CD8-positive, alpha-beta memory T cell (primary cell): ENCODE measurements at regions of chr7 and their contacts with region 1.

Region 1: GRCh38 chr7:99558306-99559174 is at the start of gene ZNF655:
- DNase-seq: peak; percentile 88 to 97 (median 95)
- H3K4me3 ChIP-seq: peak within 1 kb of the TSS; percentile 86
- H3K4me3 Mint-ChIP-seq: peak within 1 kb of the TSS; percentile 93 to 100 (median 99)
- H3K27ac ChIP-seq: peak within 1 kb of the TSS; percentile 98
- H3K27ac Mint-ChIP-seq: peak within 1 kb of the TSS; percentile 97 to 100 (median 99)
- H3K4me1 ChIP-seq: peaks cover 33% of the 10 kb centered on the region
- H3K4me1 Mint-ChIP-seq: peaks cover 45 to 73% (median 53%) of the 10 kb centered on the region in 3 donors
- H3K27me3 ChIP-seq: no peaks in the 10 kb centered on the region
- H3K27me3 Mint-ChIP-seq: peaks cover 0 to 2% of the 10 kb centered on the region in 2 donors
- total RNA-seq, gene ZNF655: 55.8 to 58.2 TPM

Region 2: DNA sequence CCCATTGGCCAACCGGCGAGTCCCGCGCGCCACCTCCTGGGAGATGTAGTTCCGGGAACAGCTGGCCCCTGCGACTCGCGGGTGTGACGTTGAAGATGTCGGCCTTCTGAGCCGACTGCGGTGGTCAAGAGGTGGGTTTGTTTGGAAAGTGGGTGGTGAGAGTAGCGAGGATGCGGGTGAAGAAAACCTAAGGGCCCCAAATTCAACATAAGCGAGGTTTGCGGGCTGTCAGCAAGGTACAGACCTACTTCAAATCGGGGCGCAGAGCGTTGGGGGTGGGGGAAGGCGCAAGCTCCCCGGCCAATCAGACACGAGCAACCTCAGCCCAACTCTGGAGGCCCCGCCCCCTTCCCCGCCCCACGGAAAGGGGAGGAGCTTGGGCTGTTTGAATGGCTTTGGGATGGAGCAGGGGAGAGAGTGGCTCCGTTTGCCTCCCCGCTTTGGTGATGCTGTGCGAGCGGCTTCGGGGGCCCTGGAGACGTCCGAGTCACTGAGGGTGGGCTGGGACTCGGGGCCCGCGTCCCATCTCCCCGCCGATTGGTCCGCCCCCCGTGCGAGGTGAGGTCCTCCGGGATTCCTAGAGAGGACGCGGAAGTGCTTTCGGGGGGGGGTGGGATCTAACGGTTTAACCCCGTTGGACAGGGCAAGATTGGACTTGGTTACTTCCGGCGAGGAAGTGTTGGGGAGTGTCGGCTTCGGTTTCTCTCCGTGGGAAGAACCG is 53.8 kb before region 1 on chr7 and contains the start of gene ZKSCAN5:
- CTCF ChIA-PET with region 1: interaction called, 7 read pairs
- POLR2A ChIA-PET with region 1: interaction called, 34 read pairs
- DNase-seq: peak; percentile 95 to 98 (median 97)
- H3K4me3 ChIP-seq: peak within 1 kb of the TSS; percentile 94
- H3K4me3 Mint-ChIP-seq: peak within 1 kb of the TSS; percentile 94 to 100 (median 97)
- H3K27ac ChIP-seq: peak within 1 kb of the TSS; percentile 75
- H3K27ac Mint-ChIP-seq: peak within 1 kb of the TSS; percentile 92 to 100 (median 99)
- H3K4me1 ChIP-seq: peaks cover 26% of the 10 kb centered on the region
- H3K4me1 Mint-ChIP-seq: peaks cover 23 to 49% (median 38%) of the 10 kb centered on the region in 3 donors
- H3K27me3 ChIP-seq: no peaks in the 10 kb centered on the region
- H3K27me3 Mint-ChIP-seq: peaks cover 0 to 3% of the 10 kb centered on the region in 2 donors
- total RNA-seq, gene ZKSCAN5: 8.4 TPM

Region 3: DNA sequence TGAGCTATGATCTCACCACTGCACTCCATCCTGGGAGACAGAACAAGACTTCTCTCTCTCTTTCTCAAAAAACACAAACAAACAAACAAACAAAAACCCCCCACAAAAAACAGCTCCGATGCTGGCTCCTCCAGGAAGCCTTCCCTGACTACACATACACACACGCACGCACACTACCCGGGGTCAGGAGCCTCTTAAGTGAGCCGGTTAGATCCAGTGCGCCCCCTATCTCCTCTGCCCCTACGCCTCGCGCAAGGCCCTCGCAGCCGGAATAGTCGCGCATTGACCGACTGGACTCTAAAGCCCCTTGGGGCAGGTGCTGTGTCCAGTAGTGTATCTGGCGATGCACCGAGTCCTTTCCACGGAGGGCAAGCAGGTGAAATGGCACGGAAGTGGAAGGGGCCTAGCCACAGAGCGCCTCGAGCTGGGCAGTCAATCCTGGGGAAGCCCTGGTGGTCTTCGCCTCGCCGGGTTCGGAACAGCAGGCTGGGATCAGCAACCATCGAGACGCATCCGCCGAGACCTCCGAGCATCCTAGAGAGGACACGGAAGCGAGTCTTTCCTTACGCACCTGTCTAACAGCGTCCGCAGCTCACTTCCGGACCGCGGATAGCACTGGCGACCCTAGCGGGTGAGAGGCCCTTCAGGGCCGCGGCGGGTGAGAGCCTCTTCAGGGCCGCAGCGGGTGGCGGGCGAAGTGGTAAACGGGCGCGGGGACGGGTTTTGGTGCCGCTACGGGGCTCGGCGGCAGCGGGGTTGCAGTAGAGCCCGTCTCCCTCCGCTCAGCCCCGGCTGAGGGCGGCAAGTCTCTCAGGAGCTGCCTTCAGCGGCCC is 58.0 kb after region 1 on chr7 and contains the start of gene ZSCAN25:
- CTCF ChIA-PET with region 1: interaction called, 3 read pairs
- POLR2A ChIA-PET with region 1: interaction called, 24 read pairs
- DNase-seq: peak; percentile 79 to 90 (median 83)
- H3K4me3 ChIP-seq: peak within 1 kb of the TSS; percentile 95
- H3K4me3 Mint-ChIP-seq: peak within 1 kb of the TSS; percentile 95 to 98 (median 98)
- H3K27ac ChIP-seq: peak within 1 kb of the TSS; percentile 88
- H3K27ac Mint-ChIP-seq: peak within 1 kb of the TSS; percentile 88 to 99 (median 97)
- H3K4me1 ChIP-seq: peaks cover 24% of the 10 kb centered on the region
- H3K4me1 Mint-ChIP-seq: peaks cover 38 to 46% (median 43%) of the 10 kb centered on the region in 3 donors
- H3K27me3 ChIP-seq: no peaks in the 10 kb centered on the region
- H3K27me3 Mint-ChIP-seq: peaks cover 0 to 2% of the 10 kb centered on the region in 2 donors
- total RNA-seq, gene ZSCAN25: 26.6 to 27.8 TPM

Region 4: DNA sequence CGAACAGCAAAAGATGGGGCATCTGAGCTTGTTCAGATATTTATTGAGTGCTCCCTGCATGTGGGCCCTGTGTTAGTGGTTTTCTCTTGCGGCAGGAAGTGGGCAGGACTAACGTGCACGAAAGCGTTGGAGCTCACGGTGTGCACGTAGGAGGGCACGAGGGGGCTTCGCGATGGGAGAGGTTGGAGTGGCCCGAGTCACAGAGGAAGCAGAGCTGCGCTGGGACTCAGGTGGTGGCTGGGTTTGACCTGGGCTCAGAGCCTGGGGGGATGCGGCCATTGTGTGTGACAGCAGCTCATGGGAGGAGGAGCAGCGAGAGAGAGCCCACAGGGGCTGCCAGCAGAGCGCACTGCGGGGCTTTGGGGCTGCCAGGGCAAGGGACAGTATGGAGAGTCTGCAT is 65.9 kb after region 1 on chr7:
- CTCF ChIA-PET with region 1: interaction called, 4 read pairs
- POLR2A ChIA-PET with region 1: interaction called, 13 read pairs
- DNase-seq: peak; percentile 67 to 92 (median 87)
- H3K4me3 ChIP-seq: peak overlapping the region; percentile 46
- H3K4me3 Mint-ChIP-seq: peak overlapping the region; percentile 84 to 92 (median 90)
- H3K27ac ChIP-seq: peak overlapping the region; percentile 32
- H3K27ac Mint-ChIP-seq: peak overlapping the region; percentile 91 to 99 (median 98)
- H3K4me1 ChIP-seq: peaks cover 37% of the 10 kb centered on the region
- H3K4me1 Mint-ChIP-seq: peaks cover 39 to 55% (median 43%) of the 10 kb centered on the region in 3 donors
- H3K27me3 ChIP-seq: no peaks in the 10 kb centered on the region
- H3K27me3 Mint-ChIP-seq: peaks cover 0 to 4% of the 10 kb centered on the region in 2 donors